ENCODE measurements at regions of chr20 and their contacts with region 1.

Region 1: DNA sequence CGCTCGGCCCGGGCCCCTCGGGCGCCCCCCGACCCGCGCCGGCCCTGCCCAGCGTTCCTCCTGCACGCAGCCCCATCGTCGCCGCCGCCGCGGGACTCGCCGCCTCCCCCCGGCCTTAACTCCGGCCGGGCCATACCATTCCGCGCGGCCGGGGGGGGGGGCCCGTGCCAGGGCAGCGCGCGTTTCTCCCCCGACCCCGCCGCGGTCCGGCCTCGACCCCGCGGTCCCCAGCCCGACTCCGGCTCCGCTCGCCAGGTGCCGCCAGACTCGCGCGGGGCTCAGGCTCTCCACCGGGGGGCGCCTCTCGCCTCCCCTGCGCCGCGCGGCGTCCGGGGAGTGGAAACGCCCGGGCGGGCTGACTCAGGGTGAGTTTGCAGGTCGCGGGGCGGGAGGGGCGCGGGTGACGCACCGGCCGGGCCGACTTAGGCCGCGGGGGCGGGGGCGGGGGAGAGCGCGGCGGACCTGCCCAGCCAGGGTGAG is at the start of gene SRXN1:
- DNase-seq: peak; percentile 94
- ATAC-seq: peak; percentile 89
- H3K4me3 ChIP-seq: peak within 1 kb of the TSS; percentile 94
- H3K27ac ChIP-seq: peak within 1 kb of the TSS; percentile 50
- H3K4me1 ChIP-seq: peaks cover 12% of the 10 kb centered on the region
- H3K27me3 ChIP-seq: peaks cover 12% of the 10 kb centered on the region
- CTCF ChIP-seq: peak; percentile 63
- total RNA-seq, gene SRXN1: 99.3 and 105 TPM in 2 replicates

Region 2: GRCh38 chr20:290084-290831 is 362.9 kb before region 1 on chr20 and contains the start of gene C20orf96:
- CTCF ChIA-PET with region 1: no interaction called
- POLR2A ChIA-PET with region 1: no interaction called
- intact Hi-C with region 1: no loop called
- DNase-seq: peak; percentile 97
- ATAC-seq: peak; percentile 83
- H3K4me3 ChIP-seq: peak within 1 kb of the TSS; percentile 84
- H3K27ac ChIP-seq: no peak within 1 kb of the TSS
- H3K4me1 ChIP-seq: peaks cover 30% of the 10 kb centered on the region
- H3K27me3 ChIP-seq: no peaks in the 10 kb centered on the region
- CTCF ChIP-seq: peak; percentile 41; the same call in 1 of the 2 replicates
- total RNA-seq, gene C20orf96: 3.4 and 5.0 TPM in 2 replicates

Region 3: GRCh38 chr20:641516-641875 is 11.7 kb before region 1 on chr20:
- CTCF ChIA-PET with region 1: no interaction called
- POLR2A ChIA-PET with region 1: no interaction called
- intact Hi-C with region 1: no loop called
- DNase-seq: no peak
- ATAC-seq: no peak
- H3K4me3 ChIP-seq: no peak overlapping the region
- H3K27ac ChIP-seq: no peak overlapping the region
- H3K4me1 ChIP-seq: no peaks in the 10 kb centered on the region
- H3K27me3 ChIP-seq: no peaks in the 10 kb centered on the region
- CTCF ChIP-seq: no peak

Region 4: DNA sequence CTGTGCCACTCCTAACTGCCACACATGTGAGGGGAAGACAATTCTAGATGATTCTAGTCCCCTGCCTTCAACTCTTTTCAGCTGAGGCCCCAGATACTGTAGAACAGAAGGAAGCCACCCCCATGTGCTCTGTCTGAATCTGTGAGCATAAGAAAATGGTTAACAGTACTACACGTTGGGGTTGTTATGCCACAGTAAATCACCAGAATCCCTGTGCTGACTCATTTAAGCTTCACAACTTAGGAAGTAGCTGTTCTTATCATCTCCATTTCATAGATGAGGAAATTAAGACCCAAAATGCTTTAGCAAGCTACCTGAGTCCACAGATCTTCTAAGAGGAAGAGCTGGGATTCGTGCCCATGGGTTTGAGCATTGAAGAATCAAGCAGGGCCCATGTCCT is 49.9 kb after region 1 on chr20:
- CTCF ChIA-PET with region 1: no interaction called
- POLR2A ChIA-PET with region 1: interaction called, 14 read pairs
- intact Hi-C with region 1: no loop called
- DNase-seq: no peak
- ATAC-seq: no peak
- H3K4me3 ChIP-seq: no peak overlapping the region
- H3K27ac ChIP-seq: no peak overlapping the region
- H3K4me1 ChIP-seq: no peaks in the 10 kb centered on the region
- H3K27me3 ChIP-seq: peaks cover 48% of the 10 kb centered on the region
- CTCF ChIP-seq: no peak

Region 5: DNA sequence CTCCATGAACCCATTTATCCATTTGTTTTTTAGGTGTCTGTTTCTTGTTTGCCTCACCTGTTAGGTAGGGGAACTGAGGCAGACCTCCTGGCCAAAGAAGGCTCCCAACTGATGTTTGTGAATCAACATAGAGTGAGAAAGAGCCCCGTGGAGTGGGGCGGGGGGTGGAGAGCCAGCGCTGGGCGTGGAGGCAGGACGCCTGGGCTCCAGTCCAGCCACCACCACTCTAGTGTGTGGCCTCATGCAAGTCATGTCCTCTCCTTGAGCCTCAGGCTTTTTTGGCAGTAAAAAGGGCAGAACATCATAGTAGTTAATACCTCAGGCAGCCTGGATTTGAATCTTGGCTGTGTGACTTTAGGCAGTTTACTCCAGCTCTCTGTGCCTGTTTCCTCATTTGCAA is 64.7 kb after region 1 on chr20:
- CTCF ChIA-PET with region 1: no interaction called
- POLR2A ChIA-PET with region 1: no interaction called
- intact Hi-C with region 1: no loop called
- DNase-seq: no peak
- ATAC-seq: no peak
- H3K4me3 ChIP-seq: no peak overlapping the region
- H3K27ac ChIP-seq: no peak overlapping the region
- H3K4me1 ChIP-seq: no peaks in the 10 kb centered on the region
- H3K27me3 ChIP-seq: peaks cover 72% of the 10 kb centered on the region
- CTCF ChIP-seq: no peak

Region 6: GRCh38 chr20:733861-734260 is 80.7 kb after region 1 on chr20:
- CTCF ChIA-PET with region 1: no interaction called
- POLR2A ChIA-PET with region 1: no interaction called
- intact Hi-C with region 1: loop called (anchors 10 kb)
- DNase-seq: no peak
- ATAC-seq: no peak
- H3K4me3 ChIP-seq: no peak overlapping the region
- H3K27ac ChIP-seq: no peak overlapping the region
- H3K4me1 ChIP-seq: no peaks in the 10 kb centered on the region
- H3K27me3 ChIP-seq: peaks cover 6% of the 10 kb centered on the region
- CTCF ChIP-seq: no peak

Region 7: GRCh38 chr20:768426-768978 is 115.4 kb after region 1 on chr20 and contains the start of gene SLC52A3:
- CTCF ChIA-PET with region 1: no interaction called
- POLR2A ChIA-PET with region 1: no interaction called
- intact Hi-C with region 1: loop called (anchors 1 kb)
- DNase-seq: peak; percentile 96
- ATAC-seq: peak; percentile 94
- H3K4me3 ChIP-seq: peak within 1 kb of the TSS; percentile 75
- H3K27ac ChIP-seq: peak within 1 kb of the TSS; percentile 71
- H3K4me1 ChIP-seq: peaks cover 13% of the 10 kb centered on the region
- H3K27me3 ChIP-seq: no peaks in the 10 kb centered on the region
- CTCF ChIP-seq: peak; percentile 92
- total RNA-seq, gene SLC52A3: 4.2 and 5.9 TPM in 2 replicates

Measured in PC-3 (cell line).